Panc1 (cell line): ENCODE measurements at regions of chr9 and their contacts with region 1.

Region 1: DNA sequence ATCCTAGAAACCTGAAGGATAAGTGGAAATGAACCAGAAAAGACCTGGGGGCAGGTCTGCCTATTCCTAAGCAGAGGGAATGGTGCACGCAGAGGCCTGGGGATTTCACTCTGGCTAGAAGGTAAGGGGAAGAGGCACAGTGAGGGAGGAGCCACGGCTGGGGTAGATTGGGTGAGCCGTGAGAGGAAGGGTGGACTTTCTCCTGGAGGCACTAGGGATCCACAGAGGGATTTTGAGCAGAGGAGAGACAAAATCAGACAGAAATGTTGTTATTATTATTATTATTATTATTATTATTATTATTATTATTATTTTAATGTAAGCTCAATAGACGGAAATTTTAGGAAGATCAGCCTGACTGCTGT is 3.0 kb upstream of the ADGRD2 start:
- DNase-seq: no peak
- ATAC-seq: no peak
- H3K4me3 ChIP-seq: no peak overlapping the region
- H3K27ac ChIP-seq: no peak overlapping the region
- H3K4me1 ChIP-seq: no peaks in the 10 kb centered on the region
- H3K27me3 ChIP-seq: no peaks in the 10 kb centered on the region
- CTCF ChIP-seq: no peak

Region 2: DNA sequence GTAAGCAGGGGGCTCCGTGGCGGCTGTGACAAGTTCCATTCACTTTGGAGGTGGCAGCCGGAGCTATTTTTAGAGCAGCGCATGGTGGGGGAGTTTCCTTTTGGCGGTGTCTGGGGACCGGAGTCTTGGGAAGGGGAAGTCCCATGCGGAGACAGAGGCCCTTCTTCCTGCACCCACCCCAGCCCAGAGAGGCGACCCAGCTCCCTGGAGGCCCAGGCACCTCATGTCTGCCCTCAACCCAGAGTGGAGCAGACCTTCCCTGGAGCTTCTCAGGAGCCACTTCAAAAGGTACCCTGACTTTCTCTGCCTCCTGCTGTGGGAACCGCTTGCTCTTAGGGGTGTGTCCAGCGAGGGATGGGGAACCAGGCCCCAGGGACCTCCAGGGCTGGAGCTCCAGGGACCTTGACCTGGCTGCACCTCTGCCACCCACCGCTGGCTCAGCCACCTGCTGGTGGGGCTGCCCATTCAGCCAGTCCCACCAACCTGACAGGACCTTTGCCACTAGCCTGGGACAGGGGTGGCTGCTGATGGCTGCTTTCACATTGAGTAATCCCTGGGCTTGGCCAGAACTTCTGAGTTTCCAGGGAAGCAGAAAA is 155.4 kb before region 1 on chr9:
- CTCF ChIA-PET with region 1: no interaction called
- POLR2A ChIA-PET with region 1: no interaction called
- in situ Hi-C with region 1: no loop called
- intact Hi-C with region 1: no loop called
- DNase-seq: no peak
- ATAC-seq: peak; percentile 25
- H3K4me3 ChIP-seq: no peak overlapping the region
- H3K27ac ChIP-seq: peak overlapping the region; percentile 87
- H3K4me1 ChIP-seq: peaks cover 95% of the 10 kb centered on the region
- H3K27me3 ChIP-seq: no peaks in the 10 kb centered on the region
- CTCF ChIP-seq: no peak

Region 3: GRCh38 chr9:124420991-124421543 is 26.2 kb before region 1 on chr9:
- CTCF ChIA-PET with region 1: no interaction called
- POLR2A ChIA-PET with region 1: interaction called, 12 read pairs
- in situ Hi-C with region 1: no loop called
- intact Hi-C with region 1: no loop called
- DNase-seq: no peak
- ATAC-seq: no peak
- H3K4me3 ChIP-seq: no peak overlapping the region
- H3K27ac ChIP-seq: no peak overlapping the region
- H3K4me1 ChIP-seq: no peaks in the 10 kb centered on the region; the same call in 1 of the 2 replicates
- H3K27me3 ChIP-seq: no peaks in the 10 kb centered on the region
- CTCF ChIP-seq: no peak